Natural killer cell (primary cell): ENCODE measurements at regions of chr9 and their contacts with region 1.

Region 1: GRCh38 chr9:97598461-97599288 is 34.5 kb downstream of the TSTD2 start:
- DNase-seq: peak; percentile 43 to 86
- ATAC-seq: peak; percentile 90 to 97 (median 97)
- H3K4me3 ChIP-seq: no peak overlapping the region
- H3K4me3 Mint-ChIP-seq: peak overlapping the region; percentile 52
- H3K27ac ChIP-seq: no peak overlapping the region
- H3K27ac Mint-ChIP-seq: peak overlapping the region in 1 of 2 donors; percentile 60
- H3K4me1 ChIP-seq: peaks cover 6% of the 10 kb centered on the region
- H3K4me1 Mint-ChIP-seq: peaks cover 7 to 9% of the 10 kb centered on the region in 2 donors
- H3K27me3 ChIP-seq: no peaks in the 10 kb centered on the region
- H3K27me3 Mint-ChIP-seq: peaks cover 0 to 1% of the 10 kb centered on the region in 2 donors
- CTCF ChIP-seq: peak; percentile 81

Region 2: DNA sequence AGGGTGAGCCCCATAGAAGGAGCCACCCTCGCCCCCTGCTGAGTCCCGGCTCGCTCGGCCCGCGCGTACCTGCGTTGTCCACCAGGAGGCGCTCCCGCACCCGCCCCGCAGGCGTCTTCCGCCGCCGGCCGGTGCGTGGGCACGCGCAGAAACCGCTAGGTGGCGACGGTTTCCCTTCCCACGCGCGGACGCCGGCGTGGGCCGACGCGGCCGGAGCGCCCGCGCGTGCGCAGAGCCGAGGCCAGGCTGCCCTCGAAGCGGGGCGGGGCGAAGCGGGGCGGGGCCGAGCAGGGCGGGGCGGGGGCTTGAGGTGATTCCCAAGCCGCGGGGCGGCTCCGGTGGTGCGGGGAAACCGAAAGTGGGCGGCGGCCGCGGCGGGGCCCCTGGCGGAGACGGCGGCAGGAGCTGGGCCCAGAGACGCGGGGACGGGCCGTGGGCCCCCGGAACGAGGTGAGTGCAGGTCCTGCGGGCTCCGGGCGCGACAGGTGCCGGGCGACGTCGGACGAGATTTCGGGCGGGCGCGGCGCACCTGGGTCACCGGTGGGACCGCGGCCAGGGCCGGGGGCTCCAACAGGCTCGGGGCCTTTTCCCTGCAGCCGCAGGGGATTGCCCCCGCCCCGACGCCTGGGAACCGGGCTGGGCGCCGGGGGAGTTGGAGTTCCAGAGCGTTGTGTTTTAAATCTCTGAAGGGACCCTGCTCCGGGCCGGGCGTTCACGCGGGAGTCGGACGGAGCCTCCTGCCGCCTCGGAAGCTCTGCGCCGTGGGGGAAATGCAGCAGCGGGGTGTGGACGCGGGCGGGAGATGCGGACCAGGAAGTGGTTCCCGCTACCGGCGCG is 186.7 kb before region 1 on chr9 and contains the start of gene TDRD7:
- intact Hi-C with region 1: loop called (anchors 1 kb)
- DNase-seq: peak; percentile 92 to 98
- ATAC-seq: peak; percentile 90 to 97 (median 92)
- H3K4me3 ChIP-seq: peak within 1 kb of the TSS; percentile 88
- H3K4me3 Mint-ChIP-seq: peak within 1 kb of the TSS; percentile 92
- H3K27ac ChIP-seq: peak within 1 kb of the TSS; percentile 87
- H3K27ac Mint-ChIP-seq: peak within 1 kb of the TSS; percentile 84 to 88
- H3K4me1 ChIP-seq: peaks cover 12% of the 10 kb centered on the region
- H3K4me1 Mint-ChIP-seq: peaks cover 38 to 39% of the 10 kb centered on the region in 2 donors
- H3K27me3 ChIP-seq: peaks cover 2% of the 10 kb centered on the region
- H3K27me3 Mint-ChIP-seq: peaks cover 14 to 20% of the 10 kb centered on the region in 2 donors
- CTCF ChIP-seq: peak; percentile 100
- total RNA-seq, gene TDRD7: 9.8 to 16.4 (median 16.3) TPM

Region 3: GRCh38 chr9:97468658-97469448 is 129.8 kb before region 1 on chr9:
- intact Hi-C with region 1: loop called (anchors 1 kb)
- DNase-seq: peak in 1 of 2 donors; percentile 58
- ATAC-seq: peak in 1 of 3 donors; percentile 41
- H3K4me3 ChIP-seq: no peak overlapping the region
- H3K4me3 Mint-ChIP-seq: no peak overlapping the region
- H3K27ac ChIP-seq: no peak overlapping the region
- H3K27ac Mint-ChIP-seq: peak overlapping the region in 1 of 2 donors; percentile 14
- H3K4me1 ChIP-seq: no peaks in the 10 kb centered on the region
- H3K4me1 Mint-ChIP-seq: peaks cover 0 to 3% of the 10 kb centered on the region in 2 donors
- H3K27me3 ChIP-seq: no peaks in the 10 kb centered on the region
- H3K27me3 Mint-ChIP-seq: no peaks in the 10 kb centered on the region
- CTCF ChIP-seq: no peak

Region 4: DNA sequence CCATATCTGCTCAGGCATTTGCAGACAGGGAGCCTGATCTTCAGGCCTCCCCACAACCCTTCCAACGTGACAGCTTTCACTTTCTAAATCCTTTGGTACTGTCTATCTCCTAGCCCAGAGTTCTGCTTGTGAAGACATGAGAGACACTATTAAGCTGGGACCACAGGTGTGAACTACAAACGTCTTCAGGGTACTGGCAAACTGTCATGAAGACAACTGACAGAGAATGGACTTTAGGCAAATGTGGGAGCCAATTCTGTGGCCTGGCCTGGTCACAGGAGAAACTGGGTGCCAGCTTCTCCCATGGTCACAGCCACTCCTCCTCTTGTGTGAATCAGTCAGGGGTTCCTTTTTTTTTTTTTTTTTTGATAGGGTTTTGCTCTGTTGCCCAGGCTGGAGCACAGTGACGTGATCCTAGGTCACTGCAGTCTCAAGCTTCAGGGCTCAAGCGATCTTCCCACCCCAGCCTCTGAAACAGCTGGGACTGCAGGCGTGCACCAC is 509.9 kb after region 1 on chr9:
- intact Hi-C with region 1: no loop called
- DNase-seq: peak; percentile 27 to 83
- ATAC-seq: peak; percentile 86 to 93 (median 93)
- H3K4me3 ChIP-seq: no peak overlapping the region
- H3K4me3 Mint-ChIP-seq: peak overlapping the region; percentile 63
- H3K27ac ChIP-seq: peak overlapping the region; percentile 82
- H3K27ac Mint-ChIP-seq: peak overlapping the region; percentile 89 to 92
- H3K4me1 ChIP-seq: peaks cover 54% of the 10 kb centered on the region
- H3K4me1 Mint-ChIP-seq: peaks cover 54 to 65% of the 10 kb centered on the region in 2 donors
- H3K27me3 ChIP-seq: no peaks in the 10 kb centered on the region
- H3K27me3 Mint-ChIP-seq: no peaks in the 10 kb centered on the region
- CTCF ChIP-seq: no peak